AG04449 (cell line): ENCODE measurements at regions of chr6 and their contacts with region 1.

Region 1: DNA sequence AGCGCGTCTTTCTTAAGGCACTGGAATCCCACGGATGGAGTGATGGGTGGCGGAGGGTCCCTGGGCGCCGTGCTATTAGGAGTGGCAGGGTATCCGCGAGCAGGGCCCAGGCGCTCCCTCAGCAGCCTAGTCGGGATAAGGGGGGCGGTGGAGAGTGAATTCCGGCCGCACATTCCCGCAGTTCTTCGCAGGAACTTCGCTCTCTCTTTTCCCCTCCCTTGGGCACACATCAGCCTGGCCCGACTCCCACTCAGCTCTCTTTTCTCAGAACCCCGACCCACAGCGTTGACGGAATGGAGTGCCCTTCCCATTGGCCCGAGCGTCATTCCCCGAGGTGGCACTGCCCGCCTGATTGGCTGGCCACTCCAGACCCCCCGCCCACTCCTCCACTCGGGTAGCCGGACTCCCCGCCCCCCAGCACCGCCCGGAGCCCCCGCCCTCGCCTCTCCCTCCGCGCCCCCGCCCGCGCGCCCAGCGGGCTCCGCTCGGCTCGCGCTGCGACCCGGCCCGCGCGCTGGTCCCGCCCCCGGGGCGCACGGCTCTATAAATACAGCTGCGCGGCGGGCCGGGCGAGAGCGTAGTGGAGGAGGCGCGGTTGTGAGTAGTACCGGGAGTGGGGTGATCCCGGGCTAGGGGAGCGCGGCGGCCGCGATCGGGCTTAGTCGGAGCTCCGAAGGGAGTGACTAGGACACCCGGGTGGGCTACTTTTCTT is at the start of gene ID4:
- DNase-seq: peak; percentile 77
- H3K4me3 ChIP-seq: peak within 1 kb of the TSS; percentile 74
- CTCF ChIP-seq: no peak

Region 2: GRCh38 chr6:19749722-19750121 is 87.2 kb before region 1 on chr6:
- CTCF ChIA-PET with region 1: no interaction called
- POLR2A ChIA-PET with region 1: no interaction called
- DNase-seq: no peak
- H3K4me3 ChIP-seq: no peak overlapping the region
- CTCF ChIP-seq: no peak

Region 3: GRCh38 chr6:19804205-19805123 is 32.5 kb before region 1 on chr6:
- CTCF ChIA-PET with region 1: no interaction called
- POLR2A ChIA-PET with region 1: interaction called, 38 read pairs
- DNase-seq: peak; percentile 69
- H3K4me3 ChIP-seq: peak overlapping the region; percentile 77
- CTCF ChIP-seq: no peak

Region 4: GRCh38 chr6:19851241-19852089 is 14.5 kb after region 1 on chr6:
- CTCF ChIA-PET with region 1: interaction called, 10 read pairs
- POLR2A ChIA-PET with region 1: interaction called, 9 read pairs
- DNase-seq: peak; percentile 36
- H3K4me3 ChIP-seq: peak overlapping the region; percentile 12; the same call in 1 of the 2 replicates
- CTCF ChIP-seq: peak; percentile 83

Region 5: GRCh38 chr6:19866985-19867627 is 30.2 kb after region 1 on chr6:
- CTCF ChIA-PET with region 1: no interaction called
- POLR2A ChIA-PET with region 1: no interaction called
- DNase-seq: no peak
- H3K4me3 ChIP-seq: no peak overlapping the region
- CTCF ChIP-seq: no peak